Panc1 (cell line): ENCODE measurements at regions of chr16 and their contacts with region 1.

Region 1: GRCh38 chr16:25020112-25020631 is 5.0 kb upstream of the ARHGAP17 start:
- DNase-seq: no peak
- ATAC-seq: no peak
- H3K4me3 ChIP-seq: no peak overlapping the region
- H3K27ac ChIP-seq: no peak overlapping the region; the same call in 1 of the 2 replicates
- H3K4me1 ChIP-seq: no peaks in the 10 kb centered on the region
- H3K27me3 ChIP-seq: no peaks in the 10 kb centered on the region
- CTCF ChIP-seq: no peak

Region 2: DNA sequence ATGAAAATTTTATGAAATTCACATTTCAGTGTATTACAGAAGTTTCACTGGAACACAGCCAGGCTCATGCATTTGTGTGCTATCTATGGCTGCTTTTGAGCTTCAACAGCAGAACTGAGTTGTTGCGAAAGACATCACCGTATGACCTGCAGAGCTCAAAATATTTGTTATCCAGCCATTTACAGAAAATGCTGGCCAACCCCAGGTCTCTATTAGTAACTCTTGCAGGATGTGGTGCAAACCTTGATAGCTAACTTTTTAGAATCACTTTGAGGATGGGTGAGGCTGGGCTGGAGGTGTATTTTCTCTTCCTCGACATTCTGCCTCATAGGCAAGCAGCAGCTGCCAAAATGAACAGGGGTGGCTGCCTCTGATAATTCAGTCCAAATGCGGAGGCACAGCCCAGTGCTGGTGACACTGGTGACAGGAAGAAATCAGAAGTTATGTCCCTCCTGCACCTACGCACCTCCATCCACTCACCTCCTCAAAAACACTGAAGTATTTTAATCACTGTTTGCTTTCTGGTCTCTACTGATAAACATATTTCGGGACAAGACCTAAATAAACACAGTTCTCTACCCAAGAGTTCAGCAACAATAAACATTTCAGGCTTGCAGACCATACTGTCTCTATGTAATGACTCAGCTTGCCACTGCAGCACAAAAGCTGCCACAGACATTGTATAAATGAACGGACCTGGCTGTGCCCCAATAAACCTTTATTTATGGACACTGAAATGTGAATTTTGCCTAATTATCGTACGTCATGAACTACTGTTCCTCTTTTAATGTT is 33.5 kb before region 1 on chr16:
- CTCF ChIA-PET with region 1: interaction called, 7 read pairs
- POLR2A ChIA-PET with region 1: interaction called, 28 read pairs
- in situ Hi-C with region 1: no loop called
- intact Hi-C with region 1: no loop called
- DNase-seq: no peak
- ATAC-seq: peak; percentile 78
- H3K4me3 ChIP-seq: peak overlapping the region in 1 of 2 experiments; percentile 46; a peak in 2 of 4 replicates
- H3K27ac ChIP-seq: peak overlapping the region; percentile 92
- H3K4me1 ChIP-seq: peaks cover 82% of the 10 kb centered on the region
- H3K27me3 ChIP-seq: no peaks in the 10 kb centered on the region
- CTCF ChIP-seq: no peak